ENCODE measurements at regions of chr15 and their contacts with region 1.

Region 1: DNA sequence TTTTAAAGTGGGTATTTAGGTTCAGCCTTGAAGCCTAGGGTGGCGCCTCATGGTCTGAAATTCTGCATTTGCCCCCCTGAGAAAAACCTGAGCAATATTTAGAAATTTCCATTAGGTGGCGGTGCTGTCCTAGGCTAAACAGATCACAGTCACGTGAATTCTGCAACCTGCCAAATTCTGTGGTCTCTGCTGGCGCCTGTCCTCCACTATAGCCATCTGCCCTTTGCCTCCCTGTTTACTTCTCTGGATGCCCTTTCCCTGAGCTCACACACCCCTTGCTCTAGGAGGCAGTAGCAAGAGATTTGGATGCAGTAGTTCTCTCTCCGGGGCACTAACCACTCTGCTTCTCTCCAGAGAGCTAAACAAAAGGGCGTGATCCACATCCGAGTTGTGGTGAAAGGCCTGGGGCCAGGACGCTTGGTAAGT is 9.1 kb downstream of the MRPS11 start:
- DNase-seq: peak; percentile 30
- H3K4me3 ChIP-seq: no peak overlapping the region
- H3K27ac ChIP-seq: no peak overlapping the region
- H3K4me1 ChIP-seq: no peaks in the 10 kb centered on the region
- H3K27me3 ChIP-seq: no peaks in the 10 kb centered on the region
- CTCF ChIP-seq: peak; percentile 48 to 61 (median 50)
- POLR2A ChIP-seq: no peak

Region 2: GRCh38 chr15:88440021-88440420 is 36.6 kb before region 1 on chr15:
- intact Hi-C with region 1: no loop called
- DNase-seq: no peak
- H3K4me3 ChIP-seq: no peak overlapping the region
- H3K27ac ChIP-seq: no peak overlapping the region
- H3K4me1 ChIP-seq: no peaks in the 10 kb centered on the region
- H3K27me3 ChIP-seq: no peaks in the 10 kb centered on the region
- CTCF ChIP-seq: no peak
- POLR2A ChIP-seq: no peak

Region 3: DNA sequence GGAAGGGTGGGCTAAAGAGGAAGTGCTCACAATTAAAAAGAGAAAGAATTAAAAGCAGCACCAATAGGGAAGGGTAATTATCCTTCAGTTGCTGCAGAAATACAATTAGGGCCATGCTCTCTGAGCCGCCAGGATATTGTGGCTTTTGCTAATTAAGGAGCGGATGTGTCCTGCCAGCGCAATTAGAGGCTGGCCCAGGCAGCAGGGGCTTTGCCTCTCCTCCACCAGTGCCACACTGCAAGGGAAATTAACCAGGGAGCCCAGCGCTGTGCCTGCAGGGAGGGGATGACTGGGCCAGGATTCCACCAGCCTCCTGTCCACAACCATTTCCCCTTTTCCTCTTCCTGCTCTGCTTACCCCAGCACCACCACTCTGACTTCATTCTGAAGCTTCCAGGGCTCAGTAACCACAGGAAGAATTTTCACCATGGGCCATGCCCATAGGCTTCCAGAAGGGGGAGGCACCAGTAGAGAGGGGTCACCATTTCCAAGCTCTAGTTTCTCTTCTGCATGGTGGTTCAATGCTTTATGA is 134.1 kb after region 1 on chr15:
- intact Hi-C with region 1: loop called (anchors 10 kb)
- DNase-seq: no peak
- H3K4me3 ChIP-seq: no peak overlapping the region
- H3K27ac ChIP-seq: no peak overlapping the region
- H3K4me1 ChIP-seq: peaks cover 4% of the 10 kb centered on the region
- H3K27me3 ChIP-seq: no peaks in the 10 kb centered on the region
- CTCF ChIP-seq: no peak
- POLR2A ChIP-seq: no peak

Region 4: GRCh38 chr15:89087830-89088604 is 611.4 kb after region 1 on chr15 and contains the start of gene ABHD2:
- intact Hi-C with region 1: loop called (anchors 10 kb)
- DNase-seq: peak; percentile 99
- H3K4me3 ChIP-seq: peak within 1 kb of the TSS; percentile 65 to 72
- H3K27ac ChIP-seq: peak within 1 kb of the TSS; percentile 81 to 89
- H3K4me1 ChIP-seq: peaks cover 33% of the 10 kb centered on the region
- H3K27me3 ChIP-seq: no peaks in the 10 kb centered on the region
- CTCF ChIP-seq: peak in 1 of 3 experiments; percentile 20
- POLR2A ChIP-seq: peak; percentile 10
- total RNA-seq, gene ABHD2: 82.5 to 109 TPM